ENCODE measurements at regions of chr12 and their contacts with region 1.

Region 1: DNA sequence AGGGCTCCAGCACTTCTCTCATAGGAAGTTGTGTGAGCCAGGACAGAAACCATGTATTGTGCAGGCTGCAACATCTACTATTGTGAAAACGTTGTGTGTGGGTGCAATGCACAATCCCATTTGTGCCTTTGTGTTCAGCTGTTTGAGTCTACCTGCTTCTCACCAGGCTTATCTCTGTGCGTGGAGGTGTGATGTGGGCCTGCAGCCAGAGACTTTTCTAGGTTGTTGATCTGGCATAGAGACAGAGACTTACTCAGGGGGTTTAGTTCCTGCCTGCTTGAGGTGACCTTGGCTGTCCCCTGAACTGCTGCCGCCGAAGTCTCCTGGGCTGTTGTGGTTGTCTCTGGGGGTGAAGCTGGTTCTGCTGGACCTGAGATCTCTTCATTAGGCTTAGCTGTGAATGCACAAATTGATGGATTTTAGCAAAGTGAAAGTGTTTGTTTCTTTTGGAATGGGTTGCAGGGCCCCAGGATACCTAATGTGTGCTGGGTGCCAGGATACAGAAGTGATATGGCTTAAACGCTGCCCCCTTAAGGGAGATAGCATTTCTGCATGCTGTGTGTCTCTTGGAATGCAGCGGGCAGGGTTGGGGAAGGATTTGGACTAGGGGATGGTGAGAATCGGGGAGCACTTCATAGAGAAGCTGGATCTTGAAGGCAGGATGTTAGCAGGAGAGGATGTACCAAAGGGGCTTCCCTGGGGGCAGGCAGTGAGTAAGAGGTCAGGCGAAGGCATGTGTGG is 2.5 kb downstream of the LACRT start:
- DNase-seq: peak; percentile 33
- ATAC-seq: peak; percentile 96
- H3K4me3 Mint-ChIP-seq: no peak overlapping the region
- H3K27ac Mint-ChIP-seq: no peak overlapping the region
- H3K4me1 Mint-ChIP-seq: peaks cover 3% of the 10 kb centered on the region; the same call in 1 of the 2 replicates
- H3K27me3 Mint-ChIP-seq: peaks cover 30% of the 10 kb centered on the region
- CTCF ChIP-seq: 0 out of 2 replicates have a peak, but pooled peaks have one; percentile 9

Region 2: GRCh38 chr12:54596526-54596946 is 35.6 kb before region 1 on chr12:
- CTCF ChIA-PET with region 1: interaction called, 14 read pairs
- POLR2A ChIA-PET with region 1: no interaction called
- DNase-seq: peak; percentile 86
- ATAC-seq: peak; percentile 94
- H3K4me3 Mint-ChIP-seq: no peak overlapping the region
- H3K27ac Mint-ChIP-seq: no peak overlapping the region
- H3K4me1 Mint-ChIP-seq: peaks cover 5% of the 10 kb centered on the region
- H3K27me3 Mint-ChIP-seq: peaks cover 82% of the 10 kb centered on the region
- CTCF ChIP-seq: peak; percentile 77

Measured in WTC11 (cell line).